ENCODE measurements at regions of chr1 and their contacts with region 1.

Region 1: DNA sequence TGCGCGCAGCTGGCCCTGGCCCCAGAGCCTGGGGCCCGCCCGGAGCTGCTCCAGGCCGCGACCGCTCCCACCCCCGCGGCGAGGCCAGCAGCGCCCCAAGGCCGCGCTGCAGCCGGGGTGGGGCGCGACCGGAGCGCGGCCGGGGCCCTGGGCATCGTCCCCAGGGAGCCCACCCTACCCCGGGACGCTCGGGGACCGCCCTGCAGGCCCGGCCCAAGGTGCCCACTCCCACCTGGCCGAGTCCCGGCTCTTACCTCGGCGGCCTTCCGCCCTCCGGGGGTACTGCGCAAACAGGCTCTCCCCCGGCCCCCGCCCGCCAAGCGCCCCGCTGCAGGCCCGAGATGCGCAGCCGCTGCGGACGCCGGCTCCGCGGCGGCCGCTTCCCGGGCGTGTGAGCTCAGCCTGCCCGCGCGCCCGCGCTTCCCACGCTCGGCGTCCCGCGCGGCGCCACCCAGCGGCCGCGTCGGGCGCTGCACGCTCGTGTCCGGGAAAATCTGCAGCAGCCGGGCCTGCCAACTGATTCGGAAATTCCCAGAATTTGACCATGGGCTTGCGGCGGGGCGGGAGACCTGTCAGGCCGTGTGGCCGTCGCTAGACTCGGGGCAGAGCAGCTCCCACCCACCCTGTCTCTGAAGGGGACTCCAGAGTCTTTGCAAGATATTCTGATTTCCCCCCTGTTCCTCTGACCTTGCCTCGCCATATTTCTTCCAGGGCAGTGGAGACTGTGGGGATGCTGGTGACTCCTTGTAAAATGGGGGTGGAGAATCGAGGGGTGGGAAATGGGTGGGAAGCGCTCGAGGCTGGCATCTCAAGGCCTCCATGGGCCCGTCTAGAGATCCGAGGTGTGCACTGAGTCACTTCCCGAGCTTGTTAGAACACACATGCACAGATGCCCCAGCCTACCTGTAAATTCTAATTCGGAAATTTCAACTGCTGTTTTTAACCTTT is 41.9 kb downstream of the CD34 start:
- DNase-seq: peak; percentile 83 to 93
- H3K4me3 ChIP-seq: peak overlapping the region; percentile 69 to 96 (median 82)
- H3K27ac ChIP-seq: peak overlapping the region; percentile 92 to 99 (median 95)
- H3K4me1 ChIP-seq: peaks cover 71 to 91% (median 81%) of the 10 kb centered on the region in 4 donors
- H3K27me3 ChIP-seq: no peaks in the 10 kb centered on the region
- CTCF ChIP-seq: peak in 5 of 7 experiments; percentile 51 to 94 (median 82)
- EP300 ChIP-seq: no peak
- POLR2A ChIP-seq: no peak

Region 2: DNA sequence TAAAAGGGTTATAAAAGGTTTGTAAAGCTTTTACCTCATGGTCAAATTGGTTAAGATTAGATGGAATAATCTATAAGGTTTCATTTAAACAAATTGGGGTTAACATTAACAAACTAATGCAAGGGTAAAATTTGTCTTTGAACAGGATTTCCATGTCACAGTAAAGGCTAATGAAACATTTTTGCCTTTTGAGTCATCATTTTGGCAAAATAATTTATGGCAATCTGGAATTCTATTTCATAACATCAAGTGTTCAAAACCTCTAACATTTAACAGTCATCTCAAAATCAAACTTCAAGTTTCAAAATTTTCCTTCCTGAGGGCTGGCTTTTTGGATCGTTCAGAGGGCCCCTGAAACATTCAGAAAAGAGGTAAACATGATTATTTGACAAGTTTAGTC is 123.8 kb before region 1 on chr1:
- intact Hi-C with region 1: no loop called
- DNase-seq: no peak
- H3K4me3 ChIP-seq: no peak overlapping the region
- H3K27ac ChIP-seq: no peak overlapping the region
- H3K4me1 ChIP-seq: peaks cover under 1 to 26% (median 11%) of the 10 kb centered on the region in 4 donors
- H3K27me3 ChIP-seq: no peaks in the 10 kb centered on the region
- CTCF ChIP-seq: no peak
- EP300 ChIP-seq: no peak
- POLR2A ChIP-seq: no peak

Region 3: DNA sequence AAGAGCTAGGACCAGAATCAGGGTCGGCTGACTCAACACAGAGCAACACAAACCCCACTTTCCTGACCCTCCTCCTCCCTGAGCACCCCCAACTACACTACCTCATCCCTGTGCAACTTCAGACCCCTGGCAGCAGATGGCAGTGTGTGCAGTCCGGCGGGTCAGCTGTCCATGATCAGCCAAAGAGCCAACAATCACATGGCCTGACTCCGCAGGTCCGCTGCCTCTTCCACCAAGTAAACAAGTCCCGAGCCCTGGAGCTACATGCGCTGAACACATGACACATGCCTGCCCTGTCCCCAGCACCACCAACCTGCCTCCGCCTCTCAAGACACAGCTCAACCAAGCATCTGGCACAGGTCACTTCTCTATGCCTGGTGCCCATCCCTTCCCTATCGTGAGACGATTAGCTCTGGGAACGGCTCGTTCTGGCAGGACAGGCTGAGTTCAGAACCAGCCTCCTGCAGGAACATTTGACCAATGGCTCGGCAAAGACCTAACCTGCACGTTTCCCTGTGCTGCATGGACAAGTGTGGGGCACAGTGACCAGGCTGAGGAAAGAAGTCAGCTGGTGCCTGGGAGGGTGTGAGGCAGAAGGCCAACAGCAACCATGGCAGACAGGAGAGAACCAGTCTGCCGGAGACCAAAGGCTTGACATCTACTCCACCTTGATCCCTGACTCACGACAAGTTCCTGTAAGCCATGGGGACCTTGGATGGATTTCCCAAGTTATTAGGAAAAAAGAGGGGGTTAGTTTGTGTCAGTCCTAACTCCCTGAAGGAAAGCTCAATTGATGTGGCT is 56.9 kb before region 1 on chr1:
- intact Hi-C with region 1: loop called (anchors 10 kb)
- DNase-seq: peak; percentile 82 to 84
- H3K4me3 ChIP-seq: peak overlapping the region in 3 of 4 donors; percentile 15 to 35 (median 26)
- H3K27ac ChIP-seq: peak overlapping the region; percentile 68 to 98 (median 97)
- H3K4me1 ChIP-seq: peaks cover 100% of the 10 kb centered on the region in 4 donors
- H3K27me3 ChIP-seq: no peaks in the 10 kb centered on the region
- CTCF ChIP-seq: peak in 5 of 7 experiments; percentile 38 to 68 (median 48)
- EP300 ChIP-seq: no peak
- POLR2A ChIP-seq: no peak

Region 4: GRCh38 chr1:207831517-207832327 is 37.3 kb before region 1 on chr1:
- intact Hi-C with region 1: loop called (anchors 5 kb)
- DNase-seq: peak in 1 of 2 donors; percentile 36
- H3K4me3 ChIP-seq: no peak overlapping the region
- H3K27ac ChIP-seq: peak overlapping the region; percentile 45 to 98 (median 97)
- H3K4me1 ChIP-seq: peaks cover 63 to 100% (median 77%) of the 10 kb centered on the region in 4 donors
- H3K27me3 ChIP-seq: no peaks in the 10 kb centered on the region
- CTCF ChIP-seq: no peak
- EP300 ChIP-seq: no peak
- POLR2A ChIP-seq: no peak

Region 5: DNA sequence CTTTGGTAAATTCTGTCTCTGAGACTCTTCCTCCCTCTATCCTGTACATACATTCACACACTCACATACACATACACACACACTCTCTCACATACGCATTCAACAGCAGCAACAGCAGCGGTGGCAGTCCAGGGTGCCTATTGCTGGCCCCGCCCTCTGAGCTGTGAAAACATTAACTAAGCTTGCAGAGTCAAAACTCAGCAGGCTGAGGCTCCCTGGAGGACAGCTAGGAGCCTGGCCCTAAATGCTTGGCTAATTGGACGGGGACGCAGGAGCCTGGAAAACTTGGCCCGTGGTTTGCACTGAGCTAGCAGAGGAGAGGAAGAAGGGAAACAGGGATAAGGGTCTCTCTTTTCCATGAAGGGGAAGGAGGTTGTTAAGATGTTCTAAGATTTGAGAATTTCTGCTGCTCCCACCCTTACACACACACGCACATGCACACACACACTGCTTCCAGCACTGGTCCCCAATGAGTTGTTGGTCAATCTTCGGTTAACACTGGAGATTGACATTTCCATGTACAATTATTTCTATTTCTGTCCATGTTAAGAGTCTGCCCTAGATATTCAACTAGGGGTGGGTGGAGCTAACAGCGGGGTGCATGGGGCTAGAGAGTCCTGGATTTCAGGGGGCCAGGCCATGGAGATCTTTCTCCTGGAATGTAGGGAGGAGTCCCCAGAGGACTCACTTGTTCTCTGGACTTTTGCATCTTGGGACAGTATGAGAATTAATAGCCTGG is 280.9 kb after region 1 on chr1:
- intact Hi-C with region 1: no loop called
- DNase-seq: peak; percentile 66 to 87
- H3K4me3 ChIP-seq: no peak overlapping the region
- H3K27ac ChIP-seq: peak overlapping the region in 4 of 5 donors; percentile 28 to 57 (median 50)
- H3K4me1 ChIP-seq: peaks cover 29 to 75% (median 50%) of the 10 kb centered on the region in 4 donors
- H3K27me3 ChIP-seq: no peaks in the 10 kb centered on the region
- CTCF ChIP-seq: peak in 1 of 7 experiments; percentile 9
- EP300 ChIP-seq: no peak
- POLR2A ChIP-seq: no peak